Transverse colon (tissue), 4 donors: ENCODE measurements at regions of chr2 and their contacts with region 1.

Region 1: DNA sequence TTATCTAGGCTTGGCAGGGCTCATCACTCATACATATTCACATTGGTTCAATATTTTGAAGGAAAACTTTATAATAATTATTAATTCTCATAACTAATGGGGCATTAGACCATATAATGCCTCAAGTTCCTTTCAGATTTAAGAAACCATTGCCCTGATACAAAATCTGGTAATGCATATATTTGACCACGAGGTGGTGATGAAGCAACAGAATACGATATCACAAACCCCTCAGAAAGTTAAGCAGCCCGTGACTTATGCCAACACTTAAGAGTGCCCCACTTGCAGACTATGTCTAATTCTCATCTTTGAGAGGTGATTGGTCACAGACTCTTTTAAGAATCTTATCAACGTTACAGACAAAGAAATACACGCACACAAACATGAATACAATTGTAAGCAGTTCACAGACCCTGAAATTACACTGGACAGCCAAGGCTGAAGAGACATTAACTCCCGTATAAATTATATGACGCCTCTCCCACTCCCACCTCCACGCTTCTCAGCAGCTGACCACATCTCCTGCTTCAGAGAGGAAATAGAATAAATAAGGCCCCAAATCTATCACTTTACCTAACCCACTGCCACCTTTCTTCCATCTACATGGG is 20.7 kb upstream of the DNAH6 start:
- DNase-seq: no peak
- H3K4me3 ChIP-seq: no peak overlapping the region
- H3K27ac ChIP-seq: no peak overlapping the region
- H3K4me1 ChIP-seq: peaks cover 0 to 13% (median 4%) of the 10 kb centered on the region in 4 donors
- H3K27me3 ChIP-seq: no peaks in the 10 kb centered on the region
- CTCF ChIP-seq: peak; percentile 64 to 80 (median 71)
- EP300 ChIP-seq: no peak
- POLR2A ChIP-seq: no peak

Region 2: GRCh38 chr2:84619794-84620371 is 124.2 kb after region 1 on chr2:
- in situ Hi-C with region 1: loop called in 1 of 4 experiments (anchors 10 kb)
- intact Hi-C with region 1: no loop called
- DNase-seq: no peak
- H3K4me3 ChIP-seq: no peak overlapping the region
- H3K27ac ChIP-seq: no peak overlapping the region
- H3K4me1 ChIP-seq: no peaks in the 10 kb centered on the region
- H3K27me3 ChIP-seq: no peaks in the 10 kb centered on the region
- CTCF ChIP-seq: no peak
- EP300 ChIP-seq: no peak
- POLR2A ChIP-seq: no peak

Region 3: DNA sequence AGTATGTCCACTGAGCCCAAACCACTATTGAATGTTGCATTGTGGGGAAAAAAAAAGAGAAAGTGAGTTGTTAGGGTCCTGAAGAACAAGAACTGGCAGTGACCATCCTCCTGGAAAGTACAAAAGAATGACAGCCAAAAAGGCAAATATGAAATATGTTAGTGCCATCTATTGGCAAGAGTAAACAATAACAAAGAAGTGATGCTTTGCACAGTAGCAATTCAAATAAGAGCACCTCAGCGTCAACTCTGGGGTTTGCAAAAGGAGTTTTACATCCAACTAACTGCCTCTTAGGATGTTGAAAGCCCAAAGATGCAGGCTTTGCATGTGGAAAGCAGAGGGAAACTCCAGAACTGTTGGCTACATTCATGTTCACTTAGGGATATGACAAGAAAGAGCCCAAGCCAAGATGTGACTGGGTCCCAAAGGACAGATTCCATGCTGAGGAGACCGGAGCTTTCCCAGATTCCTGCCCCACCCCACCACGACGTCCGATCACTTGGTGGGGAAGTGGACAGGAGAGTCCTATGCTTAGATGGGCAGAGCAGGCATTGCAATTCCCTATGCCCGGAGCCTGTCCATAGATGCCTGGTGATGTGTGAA is 369.6 kb after region 1 on chr2:
- in situ Hi-C with region 1: loop called (anchors 5 to 25 kb)
- intact Hi-C with region 1: no loop called
- DNase-seq: no peak
- H3K4me3 ChIP-seq: no peak overlapping the region
- H3K27ac ChIP-seq: no peak overlapping the region
- H3K4me1 ChIP-seq: peaks cover 0 to 6% (median 0%) of the 10 kb centered on the region in 4 donors
- H3K27me3 ChIP-seq: no peaks in the 10 kb centered on the region
- CTCF ChIP-seq: peak; percentile 12 to 37 (median 24)
- EP300 ChIP-seq: no peak
- POLR2A ChIP-seq: no peak

Region 4: GRCh38 chr2:84881581-84882414 is 386.2 kb after region 1 on chr2:
- in situ Hi-C with region 1: loop called in 1 of 4 experiments (anchors 10 kb)
- intact Hi-C with region 1: no loop called
- DNase-seq: peak; percentile 92
- H3K4me3 ChIP-seq: peak overlapping the region; percentile 45 to 75 (median 65)
- H3K27ac ChIP-seq: peak overlapping the region; percentile 76 to 92 (median 86)
- H3K4me1 ChIP-seq: peaks cover 0 to 25% (median 14%) of the 10 kb centered on the region in 4 donors
- H3K27me3 ChIP-seq: peaks cover 15% of the 10 kb centered on the region
- CTCF ChIP-seq: peak; percentile 65 to 85 (median 72)
- EP300 ChIP-seq: no peak
- POLR2A ChIP-seq: peak; percentile 40